OCI-LY7 (cell line): ENCODE measurements at regions of chr6 and their contacts with region 1.

Region 1: GRCh38 chr6:20260360-20260759 is 48.1 kb upstream of the MBOAT1 start:
- DNase-seq: no peak
- H3K4me3 ChIP-seq: no peak overlapping the region
- H3K27ac ChIP-seq: no peak overlapping the region
- H3K4me1 ChIP-seq: no peaks in the 10 kb centered on the region
- CTCF ChIP-seq: no peak

Region 2: DNA sequence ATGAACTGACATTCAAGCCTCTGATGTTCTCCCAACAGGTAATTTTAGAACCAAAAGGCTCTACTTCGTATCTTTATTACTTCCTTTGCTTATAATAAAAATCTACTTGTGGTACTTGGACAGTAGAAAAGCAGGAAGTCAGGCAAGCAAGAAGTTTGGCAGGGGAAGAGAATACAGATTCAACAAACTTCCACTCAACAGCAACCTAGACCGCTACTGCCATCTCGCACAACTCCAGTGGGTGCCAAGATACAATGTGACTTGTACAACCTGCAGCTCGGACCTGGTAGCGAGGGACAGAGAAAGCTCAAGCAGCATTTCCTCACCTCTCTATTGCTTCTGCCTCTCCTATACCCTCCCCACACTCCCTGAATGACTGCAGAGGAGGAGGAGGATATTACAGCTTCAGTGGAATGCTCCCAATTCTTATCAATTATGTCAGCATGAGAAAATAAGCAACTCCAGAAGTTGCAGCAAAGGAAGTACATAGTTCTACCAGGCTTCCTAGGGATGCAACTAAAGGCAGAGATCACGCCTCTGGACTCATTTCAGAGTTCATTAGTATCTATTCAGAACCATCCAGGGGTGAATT is 124.6 kb before region 1 on chr6:
- CTCF ChIA-PET with region 1: no interaction called
- POLR2A ChIA-PET with region 1: no interaction called
- intact Hi-C with region 1: no loop called
- DNase-seq: no peak
- H3K4me3 ChIP-seq: no peak overlapping the region
- H3K27ac ChIP-seq: no peak overlapping the region
- H3K4me1 ChIP-seq: no peaks in the 10 kb centered on the region
- CTCF ChIP-seq: no peak

Region 3: DNA sequence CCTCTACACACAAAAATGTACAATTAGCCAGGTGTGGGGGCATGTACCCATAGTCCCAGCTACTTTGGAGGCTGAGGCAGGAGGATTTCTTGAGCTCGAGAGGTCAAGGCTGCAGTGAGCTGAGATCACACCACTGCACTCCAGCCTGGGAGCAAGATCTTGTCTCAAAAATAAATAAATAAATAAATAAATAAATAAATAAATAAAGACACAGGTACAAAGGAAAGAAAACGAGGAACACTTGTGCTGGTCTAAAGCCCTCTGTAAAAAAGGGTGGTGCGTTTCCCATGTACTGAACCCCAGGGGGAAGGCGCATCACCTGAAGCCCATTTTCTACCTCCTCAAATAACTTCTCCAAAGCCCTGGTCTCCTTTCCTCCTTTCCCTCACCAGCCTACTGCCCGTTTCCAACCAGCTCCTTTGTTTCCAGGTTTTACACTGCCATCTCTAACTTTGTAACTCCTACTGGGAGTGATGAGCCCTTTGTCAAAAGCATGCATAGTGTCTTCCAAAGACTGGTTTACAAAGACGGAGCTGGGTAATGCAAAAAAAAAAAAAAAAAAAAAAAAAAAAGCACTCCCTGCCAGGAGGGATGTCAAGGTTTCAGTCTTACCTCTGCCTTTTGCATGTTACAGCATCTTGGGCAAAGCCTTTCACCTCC is 1251.7 kb after region 1 on chr6:
- CTCF ChIA-PET with region 1: no interaction called
- POLR2A ChIA-PET with region 1: interaction called, 10 read pairs
- intact Hi-C with region 1: no loop called
- DNase-seq: no peak
- H3K4me3 ChIP-seq: no peak overlapping the region
- H3K27ac ChIP-seq: no peak overlapping the region
- H3K4me1 ChIP-seq: no peaks in the 10 kb centered on the region
- CTCF ChIP-seq: no peak